ENCODE measurements at regions of chr7 and their contacts with region 1.

Region 1: DNA sequence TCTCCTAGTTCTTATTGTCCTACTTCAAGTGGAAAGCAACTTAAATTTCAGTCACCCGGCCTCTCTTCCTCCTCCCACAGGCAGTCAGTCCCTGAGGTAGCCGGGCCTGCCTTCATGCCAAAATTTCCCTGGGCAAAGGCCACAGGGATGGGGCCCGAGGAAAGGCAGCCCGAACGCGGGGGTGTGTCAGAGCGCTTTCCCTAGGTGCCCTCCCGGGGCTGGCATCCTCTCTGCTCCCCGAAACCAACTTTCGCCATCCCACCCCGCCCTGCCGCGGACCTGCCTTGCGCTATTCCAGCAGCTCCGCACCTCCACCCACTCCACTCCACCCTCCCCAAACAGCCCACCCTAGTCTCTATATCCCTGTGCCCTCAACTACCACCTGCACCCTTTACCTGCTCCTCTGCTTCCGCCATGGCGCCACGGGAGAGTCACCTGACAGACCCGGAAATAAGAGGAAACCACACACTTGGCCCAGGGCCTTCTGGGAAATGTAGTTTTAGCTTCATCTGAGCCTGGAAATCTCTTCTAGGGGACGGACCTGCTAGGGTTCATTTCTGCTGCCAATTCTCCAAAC is at the start of gene VPS41:
- DNase-seq: peak; percentile 90
- H3K4me3 Mint-ChIP-seq: peak within 1 kb of the TSS; percentile 83
- H3K27ac Mint-ChIP-seq: peak within 1 kb of the TSS; percentile 75
- H3K4me1 Mint-ChIP-seq: peaks cover 51% of the 10 kb centered on the region
- H3K27me3 Mint-ChIP-seq: no peaks in the 10 kb centered on the region
- CTCF ChIP-seq: no peak
- total RNA-seq, gene VPS41: 249 and 292 TPM in 2 replicates

Region 2: GRCh38 chr7:38825721-38826440 is 83.0 kb before region 1 on chr7:
- CTCF ChIA-PET with region 1: interaction called, 8 read pairs
- intact Hi-C with region 1: loop called (anchors 5 kb)
- DNase-seq: no peak
- H3K4me3 Mint-ChIP-seq: no peak overlapping the region
- H3K27ac Mint-ChIP-seq: peak overlapping the region; percentile 57
- H3K4me1 Mint-ChIP-seq: peaks cover 48% of the 10 kb centered on the region
- H3K27me3 Mint-ChIP-seq: no peaks in the 10 kb centered on the region
- CTCF ChIP-seq: no peak

Region 3: DNA sequence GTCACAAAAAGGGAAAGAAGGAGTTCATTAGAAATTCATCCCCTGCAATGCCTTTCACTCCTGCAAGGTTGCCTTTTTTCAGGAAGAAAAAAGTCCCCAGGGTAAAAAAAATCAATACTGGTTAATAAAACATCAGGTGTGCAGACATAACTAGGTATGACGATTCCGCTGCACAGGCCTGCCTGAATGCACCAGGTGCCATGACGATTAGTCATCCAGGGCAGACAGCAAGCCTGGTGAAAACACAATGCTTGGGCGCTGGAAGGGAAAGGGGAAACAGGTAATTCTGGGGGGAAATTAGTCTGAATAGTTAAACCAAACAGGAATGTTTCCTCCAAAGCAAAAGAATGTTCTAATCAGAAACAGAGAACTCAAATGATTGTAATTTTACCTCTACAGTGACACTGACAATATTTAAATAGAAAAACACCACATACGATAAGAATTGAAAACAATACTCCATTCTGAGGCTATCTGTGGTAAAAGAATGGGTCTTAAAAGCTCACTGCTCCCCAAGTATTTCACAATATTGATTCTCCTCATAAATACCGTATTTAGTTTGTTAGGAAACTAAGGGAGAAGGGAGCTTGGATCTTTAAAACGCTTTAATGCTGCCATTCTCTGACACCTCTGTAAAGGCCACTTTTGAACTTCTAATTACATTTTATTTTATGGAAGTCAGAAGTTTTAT is 45.1 kb before region 1 on chr7:
- CTCF ChIA-PET with region 1: interaction called, 3 read pairs
- intact Hi-C with region 1: loop called (anchors 2 kb)
- DNase-seq: peak; percentile 96
- H3K4me3 Mint-ChIP-seq: peak overlapping the region; percentile 52
- H3K27ac Mint-ChIP-seq: peak overlapping the region; percentile 77
- H3K4me1 Mint-ChIP-seq: peaks cover 33% of the 10 kb centered on the region
- H3K27me3 Mint-ChIP-seq: no peaks in the 10 kb centered on the region
- CTCF ChIP-seq: no peak

Region 4: DNA sequence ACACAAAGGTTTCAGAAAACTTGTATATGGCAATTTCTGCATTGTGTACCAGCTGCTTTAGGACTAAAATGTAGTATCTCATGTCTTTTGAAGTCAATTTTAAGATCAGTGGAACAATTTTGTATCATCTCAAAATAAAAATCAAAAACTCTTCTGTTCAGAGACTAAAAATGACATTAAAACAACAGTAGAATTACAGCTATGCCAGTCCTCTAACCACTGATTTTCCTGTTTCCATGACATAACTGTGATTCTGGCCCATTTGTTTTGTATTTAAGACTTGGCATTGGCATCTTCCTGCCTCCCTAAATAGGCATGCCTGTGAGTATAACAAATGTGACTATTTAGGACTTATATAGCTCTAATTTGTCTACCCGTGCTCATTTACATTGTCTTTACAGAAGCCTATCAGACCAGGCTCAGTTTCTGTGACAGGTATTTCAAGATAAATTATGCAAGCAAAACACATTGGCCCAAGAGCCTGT is 29.2 kb after region 1 on chr7:
- CTCF ChIA-PET with region 1: no interaction called
- intact Hi-C with region 1: no loop called
- DNase-seq: no peak
- H3K4me3 Mint-ChIP-seq: no peak overlapping the region
- H3K27ac Mint-ChIP-seq: no peak overlapping the region
- H3K4me1 Mint-ChIP-seq: peaks cover 34% of the 10 kb centered on the region
- H3K27me3 Mint-ChIP-seq: no peaks in the 10 kb centered on the region
- CTCF ChIP-seq: no peak

Measured in Calu3 (cell line).